A673 (cell line): ENCODE measurements at regions of chr2 and their contacts with region 1.

Region 1: GRCh38 chr2:207905546-207905945 is 119.8 kb downstream of the PLEKHM3 start:
- DNase-seq: no peak
- H3K4me3 ChIP-seq: no peak overlapping the region
- H3K27ac ChIP-seq: no peak overlapping the region
- H3K4me1 ChIP-seq: no peaks in the 10 kb centered on the region
- H3K27me3 ChIP-seq: no peaks in the 10 kb centered on the region
- CTCF ChIP-seq: no peak

Region 2: DNA sequence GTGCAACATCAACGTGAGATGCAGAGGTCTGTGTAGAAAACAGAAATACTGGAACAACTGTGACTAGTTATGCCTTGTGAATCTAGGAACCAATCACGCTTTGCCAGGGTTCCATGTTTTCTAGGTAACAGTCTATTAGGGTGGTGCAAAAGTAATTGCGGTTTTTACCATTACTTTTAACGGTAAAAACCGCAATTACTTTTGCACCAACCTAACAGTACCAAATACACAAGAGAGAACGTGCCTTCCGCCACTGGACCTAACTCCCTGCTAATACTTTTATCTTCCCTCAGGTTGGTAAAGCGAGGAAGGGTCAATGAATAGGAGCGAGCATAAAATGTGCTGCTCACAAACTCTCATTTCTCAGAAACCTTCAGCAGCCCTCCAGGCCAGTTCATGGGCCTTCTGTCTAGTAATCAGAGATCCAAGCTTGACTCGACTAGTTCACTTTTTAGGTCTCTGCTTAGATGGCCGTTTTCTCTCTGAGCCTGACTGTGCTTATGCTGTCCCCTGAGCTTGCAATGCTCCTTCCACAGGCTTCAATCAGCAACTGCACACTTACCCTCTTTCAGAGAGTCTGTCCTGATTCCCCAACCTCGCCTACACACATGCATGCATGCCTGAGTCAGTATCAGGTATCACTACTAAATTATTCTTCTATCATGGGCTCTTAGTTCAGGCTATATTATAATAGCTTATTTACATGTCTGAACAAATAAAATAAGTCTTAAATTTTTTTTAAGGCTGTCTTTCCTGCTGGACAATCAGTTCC is 72.8 kb after region 1 on chr2:
- CTCF ChIA-PET with region 1: no interaction called
- POLR2A ChIA-PET with region 1: no interaction called
- intact Hi-C with region 1: no loop called
- DNase-seq: no peak
- H3K4me3 ChIP-seq: no peak overlapping the region
- H3K27ac ChIP-seq: no peak overlapping the region
- H3K4me1 ChIP-seq: no peaks in the 10 kb centered on the region
- H3K27me3 ChIP-seq: no peaks in the 10 kb centered on the region
- CTCF ChIP-seq: no peak

Region 3: DNA sequence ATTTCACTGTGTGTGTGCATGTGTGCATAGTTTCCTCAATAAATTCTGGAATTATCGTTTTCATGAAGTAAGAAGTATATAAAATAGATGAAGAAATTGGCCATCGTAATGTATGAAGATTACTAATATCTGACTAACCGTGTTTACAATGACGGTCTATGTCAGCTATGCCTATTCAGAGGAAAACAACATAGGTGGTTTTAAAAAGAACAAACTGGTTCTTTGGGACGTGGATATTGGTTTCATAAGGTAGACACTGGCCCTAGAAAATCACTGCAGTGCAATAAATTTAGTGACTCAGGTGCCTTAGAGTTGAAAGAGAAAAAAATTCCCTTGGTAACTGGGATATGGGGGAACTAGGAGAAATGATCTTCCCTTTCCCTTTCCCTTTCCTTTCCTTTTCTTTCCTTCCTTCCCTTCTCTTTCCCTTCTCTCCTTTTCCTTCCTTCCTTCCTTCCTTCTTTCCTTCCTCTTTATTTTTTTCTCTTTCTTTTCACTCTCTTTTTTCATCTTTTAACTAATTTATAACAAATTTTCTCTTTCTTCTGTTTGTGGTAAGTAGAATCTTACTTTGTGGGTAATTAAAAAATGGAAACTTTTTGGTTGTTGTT is 1554.7 kb after region 1 on chr2:
- CTCF ChIA-PET with region 1: no interaction called
- POLR2A ChIA-PET with region 1: interaction called, 12 read pairs
- intact Hi-C with region 1: no loop called
- DNase-seq: no peak
- H3K4me3 ChIP-seq: no peak overlapping the region
- H3K27ac ChIP-seq: no peak overlapping the region
- H3K4me1 ChIP-seq: no peaks in the 10 kb centered on the region
- H3K27me3 ChIP-seq: no peaks in the 10 kb centered on the region
- CTCF ChIP-seq: no peak